ENCODE measurements at regions of chr12 and their contacts with region 1.

Region 1: GRCh38 chr12:6620137-6620884 is 13.1 kb upstream of the CHD4 start:
- DNase-seq: peak; percentile 88
- ATAC-seq: peak; percentile 87
- H3K4me3 Mint-ChIP-seq: peak overlapping the region; percentile 57
- H3K27ac Mint-ChIP-seq: no peak overlapping the region
- H3K4me1 Mint-ChIP-seq: peaks cover 6% of the 10 kb centered on the region; the same call in 1 of the 2 replicates
- H3K27me3 Mint-ChIP-seq: peaks cover 34% of the 10 kb centered on the region
- CTCF ChIP-seq: peak; percentile 78

Region 2: GRCh38 chr12:6606293-6607131 is 13.8 kb before region 1 on chr12:
- CTCF ChIA-PET with region 1: interaction called, 12 read pairs
- POLR2A ChIA-PET with region 1: interaction called, 4 read pairs
- DNase-seq: peak; percentile 44
- ATAC-seq: peak; percentile 40
- H3K4me3 Mint-ChIP-seq: no peak overlapping the region; the same call in 1 of the 2 replicates
- H3K27ac Mint-ChIP-seq: no peak overlapping the region
- H3K4me1 Mint-ChIP-seq: peaks cover 35% of the 10 kb centered on the region
- H3K27me3 Mint-ChIP-seq: no peaks in the 10 kb centered on the region
- CTCF ChIP-seq: no peak

Region 3: DNA sequence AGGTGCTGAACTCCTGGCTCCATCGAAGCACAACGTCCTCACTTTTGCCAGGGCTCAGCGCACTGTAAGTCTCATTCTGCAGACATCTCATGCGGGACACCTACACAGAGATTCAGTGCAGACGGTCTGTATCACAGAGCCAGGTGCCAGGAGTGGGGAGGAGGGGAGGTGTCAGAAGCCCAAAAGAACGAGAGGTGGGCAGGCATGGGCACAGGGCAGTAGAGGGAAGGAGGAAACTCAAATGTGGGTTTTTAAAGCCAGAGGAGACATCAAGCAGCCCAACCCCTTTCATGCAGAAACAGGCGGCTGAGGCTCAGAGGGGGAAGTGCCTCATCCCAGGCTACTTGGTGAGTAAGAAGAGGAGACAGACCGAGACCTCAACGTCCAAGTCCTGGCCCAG is 18.0 kb after region 1 on chr12:
- CTCF ChIA-PET with region 1: interaction called, 111 read pairs
- POLR2A ChIA-PET with region 1: no interaction called
- DNase-seq: no peak
- ATAC-seq: no peak
- H3K4me3 Mint-ChIP-seq: no peak overlapping the region
- H3K27ac Mint-ChIP-seq: 0 out of 2 replicates have a peak overlapping the region, but pooled peaks have one; percentile 3
- H3K4me1 Mint-ChIP-seq: peaks cover 13% of the 10 kb centered on the region
- H3K27me3 Mint-ChIP-seq: peaks cover 24% of the 10 kb centered on the region
- CTCF ChIP-seq: no peak

Region 4: DNA sequence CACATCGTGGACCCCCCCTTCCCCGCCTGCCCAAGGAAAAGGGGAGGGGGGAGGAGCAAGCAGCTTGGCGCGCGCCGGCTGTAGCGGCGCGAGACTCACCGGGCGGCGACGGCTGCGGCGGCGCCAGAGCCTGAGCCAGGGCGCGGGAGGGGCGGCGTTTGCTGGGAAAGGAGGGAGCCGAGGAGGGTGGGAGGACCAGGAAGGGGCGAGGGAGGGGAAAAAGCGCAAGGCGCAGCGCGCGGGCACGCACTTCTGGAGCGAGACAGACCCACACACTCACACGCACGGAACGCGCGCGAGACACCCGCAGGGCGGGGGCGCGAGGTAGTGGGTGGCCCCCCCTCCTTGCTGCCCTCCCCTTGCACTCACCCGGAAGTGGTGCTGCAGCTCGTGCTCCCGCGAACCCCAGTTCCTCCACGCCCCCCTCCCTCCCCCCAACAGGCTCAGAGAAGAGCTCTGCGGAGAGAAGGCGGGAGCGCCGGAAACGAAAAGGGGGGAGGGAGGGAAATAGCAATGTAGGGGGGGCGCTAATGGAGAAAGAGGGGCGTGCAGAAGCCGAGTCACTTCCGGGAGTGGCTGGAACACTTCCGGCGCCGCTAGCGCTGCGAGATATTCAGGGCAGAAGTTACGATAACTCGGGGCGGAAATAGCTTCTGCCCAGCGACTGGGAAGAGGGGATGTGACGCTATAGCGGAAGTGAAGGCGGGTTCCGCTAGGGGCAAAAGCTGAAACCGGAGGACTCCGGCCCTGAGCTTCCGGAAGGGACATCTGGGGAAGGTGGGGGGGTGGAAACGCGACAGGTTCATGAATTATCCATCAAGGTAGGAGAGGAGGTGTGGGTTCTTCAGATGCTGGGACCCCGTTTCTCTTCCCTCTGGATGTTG is 68.9 kb after region 1 on chr12 and contains the start of gene ZNF384:
- CTCF ChIA-PET with region 1: interaction called, 39 read pairs
- POLR2A ChIA-PET with region 1: interaction called, 3 read pairs
- DNase-seq: peak; percentile 95
- ATAC-seq: peak; percentile 81
- H3K4me3 Mint-ChIP-seq: peak within 1 kb of the TSS; percentile 86
- H3K27ac Mint-ChIP-seq: peak within 1 kb of the TSS; percentile 95
- H3K4me1 Mint-ChIP-seq: peaks cover 23% of the 10 kb centered on the region
- H3K27me3 Mint-ChIP-seq: 0 out of 2 replicates have a peak, but pooled peaks cover under 1% of the 10 kb centered on the region
- CTCF ChIP-seq: no peak
- total RNA-seq, gene ZNF384: 63.8 to 64.7 TPM (median 64.4 TPM) in 3 replicates

Region 5: GRCh38 chr12:6723607-6724396 is 103.5 kb after region 1 on chr12 and contains the start of gene COPS7A:
- CTCF ChIA-PET with region 1: interaction called, 14 read pairs
- POLR2A ChIA-PET with region 1: interaction called, 3 read pairs
- DNase-seq: peak; percentile 98
- ATAC-seq: peak; percentile 98
- H3K4me3 Mint-ChIP-seq: peak within 1 kb of the TSS; percentile 88
- H3K27ac Mint-ChIP-seq: peak within 1 kb of the TSS; percentile 98
- H3K4me1 Mint-ChIP-seq: peaks cover 11% of the 10 kb centered on the region
- H3K27me3 Mint-ChIP-seq: peaks cover 16% of the 10 kb centered on the region
- CTCF ChIP-seq: no peak
- total RNA-seq, gene COPS7A: 41.2 to 43.8 TPM (median 41.4 TPM) in 3 replicates